ENCODE measurements at regions of chr5 and their contacts with region 1.

Region 1: DNA sequence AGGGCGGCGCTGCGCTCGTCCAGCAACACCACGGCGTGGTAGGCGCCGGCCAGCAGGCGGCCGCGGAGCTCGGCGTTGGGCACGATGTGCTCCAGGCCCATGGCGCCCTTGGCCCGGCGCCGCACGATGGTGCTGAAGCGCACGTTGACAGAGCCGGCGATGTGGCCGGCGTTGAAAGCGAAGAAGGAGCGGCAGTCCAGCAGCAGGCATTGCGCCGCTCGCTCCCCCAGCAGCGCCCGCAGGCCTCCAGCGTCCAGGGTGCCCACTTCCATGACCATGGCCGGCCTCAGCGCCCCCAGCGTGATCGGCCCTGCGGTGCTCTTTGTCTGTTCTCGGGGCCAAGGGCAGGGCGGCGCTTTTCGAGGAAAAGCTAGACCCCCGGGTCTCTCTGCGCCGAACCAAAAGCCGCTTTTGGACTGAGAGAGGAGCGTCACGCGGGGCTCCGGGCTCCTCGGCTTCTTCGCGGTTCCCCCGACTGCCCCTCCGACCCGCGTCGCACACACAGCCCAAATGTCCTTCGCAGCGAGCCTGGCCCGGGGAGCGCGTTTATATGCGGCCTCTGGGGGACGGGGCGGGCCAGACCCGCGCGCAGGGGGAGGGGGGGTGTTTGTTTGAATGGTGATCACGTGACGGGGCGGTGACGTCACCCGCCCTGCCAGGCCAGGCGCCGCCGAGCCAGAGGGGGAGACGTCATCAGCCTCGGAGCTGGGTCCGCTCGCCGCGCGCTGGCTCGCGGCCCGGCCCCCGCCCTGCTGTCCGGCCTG is at the start of gene DUSP1:
- DNase-seq: peak; percentile 95
- H3K4me3 ChIP-seq: peak within 1 kb of the TSS; percentile 70 to 92 (median 73)
- H3K27ac ChIP-seq: peak within 1 kb of the TSS; percentile 93
- H3K4me1 ChIP-seq: peaks cover 57% of the 10 kb centered on the region
- H3K27me3 ChIP-seq: no peaks in the 10 kb centered on the region
- CTCF ChIP-seq: peak; percentile 29 to 59
- total RNA-seq, gene DUSP1: 20.7 to 28.8 TPM

Region 2: GRCh38 chr5:172347496-172348052 is 423.3 kb before region 1 on chr5:
- CTCF ChIA-PET with region 1: no interaction called
- dilution Hi-C with region 1: no loop called
- in situ Hi-C with region 1: no loop called
- intact Hi-C with region 1: no loop called
- DNase-seq: no peak
- H3K4me3 ChIP-seq: no peak overlapping the region
- H3K27ac ChIP-seq: no peak overlapping the region
- H3K4me1 ChIP-seq: peaks cover 6% of the 10 kb centered on the region
- H3K27me3 ChIP-seq: no peaks in the 10 kb centered on the region
- CTCF ChIP-seq: no peak

Region 3: DNA sequence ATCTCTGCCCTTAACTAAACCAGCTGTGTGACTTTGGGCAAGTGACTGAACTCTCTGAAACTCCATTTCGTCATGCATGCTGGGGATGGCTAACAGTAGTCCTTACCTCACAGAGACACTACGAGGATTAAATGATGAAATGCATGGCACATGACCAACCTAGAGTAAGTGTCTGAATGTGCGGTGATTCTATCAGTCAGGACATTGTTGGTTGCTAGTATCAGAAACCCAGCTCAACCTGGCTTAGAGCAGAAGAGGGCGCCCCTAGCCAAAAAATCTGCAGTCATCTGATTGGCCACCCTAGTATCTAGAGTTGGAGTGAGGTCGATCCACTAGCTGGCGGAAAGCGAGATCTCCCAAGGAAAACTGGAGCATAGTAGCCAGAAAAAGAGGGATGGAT is 104.6 kb before region 1 on chr5:
- CTCF ChIA-PET with region 1: no interaction called
- dilution Hi-C with region 1: no loop called
- in situ Hi-C with region 1: no loop called
- intact Hi-C with region 1: no loop called
- DNase-seq: no peak
- H3K4me3 ChIP-seq: no peak overlapping the region
- H3K27ac ChIP-seq: no peak overlapping the region
- H3K4me1 ChIP-seq: no peaks in the 10 kb centered on the region
- H3K27me3 ChIP-seq: no peaks in the 10 kb centered on the region
- CTCF ChIP-seq: no peak

Region 4: GRCh38 chr5:172800088-172800551 is 29.3 kb after region 1 on chr5:
- CTCF ChIA-PET with region 1: no interaction called
- dilution Hi-C with region 1: no loop called
- in situ Hi-C with region 1: no loop called
- intact Hi-C with region 1: loop called (anchors 1 kb)
- DNase-seq: peak; percentile 93
- H3K4me3 ChIP-seq: no peak overlapping the region
- H3K27ac ChIP-seq: peak overlapping the region; percentile 96
- H3K4me1 ChIP-seq: peaks cover 48% of the 10 kb centered on the region
- H3K27me3 ChIP-seq: no peaks in the 10 kb centered on the region
- CTCF ChIP-seq: no peak

Region 5: GRCh38 chr5:172868924-172869591 is 98.2 kb after region 1 on chr5:
- CTCF ChIA-PET with region 1: no interaction called
- dilution Hi-C with region 1: no loop called
- in situ Hi-C with region 1: loop called in 1 of 2 experiments (anchors 10 kb)
- intact Hi-C with region 1: loop called (anchors 1 kb)
- DNase-seq: peak; percentile 76
- H3K4me3 ChIP-seq: no peak overlapping the region
- H3K27ac ChIP-seq: peak overlapping the region; percentile 86
- H3K4me1 ChIP-seq: peaks cover 58% of the 10 kb centered on the region
- H3K27me3 ChIP-seq: no peaks in the 10 kb centered on the region
- CTCF ChIP-seq: peak in 1 of 2 donors; percentile 35

Region 6: GRCh38 chr5:172904643-172905347 is 133.9 kb after region 1 on chr5:
- CTCF ChIA-PET with region 1: no interaction called
- dilution Hi-C with region 1: no loop called
- in situ Hi-C with region 1: no loop called
- intact Hi-C with region 1: loop called (anchors 1 kb)
- DNase-seq: peak; percentile 100
- H3K4me3 ChIP-seq: no peak overlapping the region
- H3K27ac ChIP-seq: peak overlapping the region; percentile 97
- H3K4me1 ChIP-seq: peaks cover 31% of the 10 kb centered on the region
- H3K27me3 ChIP-seq: no peaks in the 10 kb centered on the region
- CTCF ChIP-seq: no peak

Region 7: GRCh38 chr5:172958331-172959046 is 187.6 kb after region 1 on chr5:
- CTCF ChIA-PET with region 1: interaction called, 4 read pairs
- dilution Hi-C with region 1: no loop called
- in situ Hi-C with region 1: no loop called
- intact Hi-C with region 1: loop called (anchors 1 kb)
- DNase-seq: peak; percentile 37
- H3K4me3 ChIP-seq: peak overlapping the region; percentile 75 to 100 (median 98)
- H3K27ac ChIP-seq: peak overlapping the region; percentile 86
- H3K4me1 ChIP-seq: peaks cover 22% of the 10 kb centered on the region
- H3K27me3 ChIP-seq: no peaks in the 10 kb centered on the region
- CTCF ChIP-seq: no peak

Region 8: GRCh38 chr5:173155912-173156311 is 385.1 kb after region 1 on chr5:
- CTCF ChIA-PET with region 1: no interaction called
- dilution Hi-C with region 1: no loop called
- in situ Hi-C with region 1: no loop called
- intact Hi-C with region 1: no loop called
- DNase-seq: no peak
- H3K4me3 ChIP-seq: no peak overlapping the region
- H3K27ac ChIP-seq: no peak overlapping the region
- H3K4me1 ChIP-seq: peaks cover 2% of the 10 kb centered on the region
- H3K27me3 ChIP-seq: no peaks in the 10 kb centered on the region
- CTCF ChIP-seq: no peak

Measured in mammary epithelial cell (primary cell).